Posterior vena cava (tissue), 2 donors: ENCODE measurements at regions of chr12 and their contacts with region 1.

Region 1: DNA sequence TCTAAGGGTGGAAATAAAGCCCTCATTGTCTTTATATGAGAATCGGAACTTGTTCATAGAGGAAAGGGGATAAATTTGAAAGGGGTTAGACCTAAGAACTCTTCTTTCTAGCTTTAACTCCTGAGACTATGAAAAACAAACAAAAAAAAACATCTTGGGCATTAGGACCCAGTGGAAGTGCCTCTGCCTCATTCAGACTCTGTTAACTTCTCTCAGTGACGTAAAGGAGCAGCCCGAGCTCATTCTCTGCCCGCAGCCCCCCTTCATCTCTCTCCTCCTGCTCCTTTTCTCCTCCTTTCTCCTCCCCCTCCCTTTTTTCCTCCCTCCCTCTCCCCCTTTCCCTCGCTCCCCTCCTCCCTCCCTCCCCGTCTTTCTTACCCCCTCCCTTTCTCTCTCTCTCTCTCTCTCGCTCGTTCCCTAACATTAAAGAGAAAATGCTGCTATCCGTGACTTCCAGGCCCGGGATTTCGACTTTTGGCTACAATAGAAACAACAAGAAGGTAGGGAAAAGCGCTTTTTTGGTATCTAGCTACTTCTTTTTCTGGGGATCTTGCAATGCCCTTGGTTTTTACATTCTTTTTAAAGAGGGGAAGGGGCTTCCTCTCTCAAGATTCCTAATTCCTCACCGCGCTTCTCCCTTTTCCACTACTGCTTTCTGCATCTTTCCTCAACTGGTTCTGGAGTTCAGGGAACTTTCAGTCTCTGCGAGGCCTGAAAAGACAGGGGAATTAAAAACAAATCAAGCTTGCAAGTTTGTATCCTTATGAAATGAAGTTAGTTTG is at the start of gene RBMS2:
- DNase-seq: peak; percentile 90
- total RNA-seq, gene RBMS2: 57.2 to 60.5 TPM

Region 2: DNA sequence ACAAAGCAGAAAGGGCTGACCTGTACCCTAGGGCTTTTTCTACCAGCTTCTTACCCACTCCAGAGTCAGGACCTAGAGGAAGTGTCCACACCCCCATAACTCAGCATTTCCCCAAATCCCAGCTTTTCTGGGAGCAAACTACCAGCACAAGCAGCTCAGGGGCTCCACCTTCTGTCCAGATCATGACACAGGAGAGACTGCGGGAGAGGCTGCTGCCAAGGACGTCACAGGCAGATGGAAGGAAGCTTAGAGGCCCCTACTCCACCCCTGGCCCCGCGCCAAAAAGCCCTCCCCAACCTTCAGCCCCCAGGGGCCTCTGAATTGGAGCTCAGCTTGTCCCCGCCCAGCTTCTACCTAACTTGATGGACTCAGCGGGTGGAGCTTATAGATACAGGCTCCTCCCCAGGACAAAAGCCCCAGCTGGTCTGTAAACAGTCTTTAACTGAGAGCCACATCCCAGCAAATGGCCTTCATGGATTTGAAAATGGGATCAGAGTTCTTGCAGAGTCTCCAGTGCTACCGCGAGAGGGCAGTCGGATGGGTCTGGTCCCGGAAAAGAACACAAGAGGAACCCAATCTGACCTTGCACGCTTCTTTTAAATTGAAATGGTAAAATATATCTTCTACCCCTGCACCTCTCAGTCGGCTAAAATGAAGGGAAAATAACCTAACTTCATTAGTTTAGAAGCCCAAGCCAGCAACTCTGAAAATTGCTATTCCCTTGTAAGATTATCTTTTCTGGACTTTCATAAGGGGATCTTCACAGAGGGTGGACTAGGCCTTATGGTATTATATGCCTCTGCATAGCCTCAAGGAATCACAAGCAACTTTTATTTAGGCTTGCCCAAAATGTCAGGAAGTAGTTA is 115.1 kb after region 1 on chr12:
- intact Hi-C with region 1: loop called in 1 of 2 experiments (anchors 5 kb)
- DNase-seq: peak; percentile 99

Region 3: GRCh38 chr12:57918147-57918546 is 1396.4 kb after region 1 on chr12:
- intact Hi-C with region 1: no loop called
- DNase-seq: no peak